ENCODE measurements at regions of chr12 and their contacts with region 1.

Region 1: DNA sequence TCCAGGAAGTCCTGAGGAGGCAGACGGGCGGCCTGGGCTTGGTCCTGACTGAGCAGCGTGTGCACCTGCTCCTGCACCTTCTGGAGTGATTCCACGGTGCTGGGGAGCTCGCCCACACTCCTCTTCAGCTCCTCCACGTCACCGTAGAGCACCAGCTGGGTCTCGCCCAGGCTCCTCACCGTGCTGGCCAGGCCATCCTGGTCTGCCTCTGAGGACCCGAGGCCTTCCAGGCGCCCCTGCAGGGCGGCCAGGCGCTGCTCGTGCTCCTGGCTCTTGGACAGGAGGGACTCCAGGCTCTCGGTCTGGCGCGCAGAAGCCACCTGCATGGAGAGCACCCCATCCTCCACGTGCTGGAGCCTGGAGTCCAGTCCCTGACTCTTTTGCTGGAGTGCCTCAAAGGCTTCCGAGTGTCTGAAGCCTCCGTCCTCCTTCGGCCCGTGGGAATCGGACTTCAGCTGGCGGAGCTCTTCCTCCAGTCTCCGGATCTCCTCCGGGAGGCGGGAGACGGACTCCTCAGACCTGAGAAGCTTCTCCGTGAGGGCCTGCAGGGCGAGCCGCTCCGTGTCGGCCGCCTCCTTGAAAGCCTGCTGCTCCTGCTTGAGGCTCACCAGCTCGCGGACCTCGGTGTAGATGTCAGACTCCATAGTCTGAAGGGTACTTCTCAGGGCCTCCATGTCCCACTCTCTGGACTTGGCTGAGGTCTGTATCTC is 8.4 kb downstream of the CKAP4 start:
- DNase-seq: peak in 1 of 3 donors; percentile 41
- ATAC-seq: peak in 1 of 4 donors; percentile 31
- H3K4me3 ChIP-seq: no peak overlapping the region
- H3K27ac ChIP-seq: no peak overlapping the region
- H3K4me1 ChIP-seq: no peaks in the 10 kb centered on the region
- H3K27me3 ChIP-seq: no peaks in the 10 kb centered on the region
- CTCF ChIP-seq: no peak
- POLR2A ChIP-seq: no peak

Region 2: DNA sequence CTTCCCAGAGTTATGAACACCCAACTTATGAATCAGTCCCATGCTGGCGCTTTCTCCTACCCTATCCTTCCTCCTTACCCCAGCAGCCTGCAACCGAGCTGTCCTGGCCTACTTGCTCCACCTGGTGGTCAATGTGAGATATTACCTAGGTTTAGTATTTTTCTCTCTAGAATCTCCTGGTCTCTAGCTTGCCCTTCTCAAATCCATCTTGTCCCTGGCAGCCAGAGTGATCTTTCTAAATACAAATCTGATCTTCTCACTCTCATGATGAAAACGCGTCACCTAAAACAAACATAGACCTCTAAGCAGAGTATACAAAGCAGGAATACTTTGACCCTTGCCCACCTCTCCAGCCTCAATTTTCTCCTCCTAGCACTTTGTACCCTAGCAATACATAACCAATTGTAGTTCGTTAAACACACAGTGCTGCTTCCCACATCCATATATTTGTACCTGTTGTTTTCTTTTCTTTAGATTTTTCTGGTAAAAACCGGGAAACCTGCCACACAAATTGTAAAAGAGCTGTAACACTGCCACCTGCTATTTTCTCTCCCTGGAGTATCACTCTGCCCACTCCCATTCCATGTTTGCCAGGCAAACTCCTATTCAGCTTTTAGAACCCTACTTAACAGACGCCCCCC is 43.2 kb after region 1 on chr12:
- intact Hi-C with region 1: loop called in 1 of 2 experiments (anchors 5 kb)
- DNase-seq: peak; percentile 49 to 73 (median 66)
- ATAC-seq: peak; percentile 93 to 97 (median 95)
- H3K4me3 ChIP-seq: no peak overlapping the region
- H3K27ac ChIP-seq: peak overlapping the region in 2 of 3 donors; percentile 24 to 40
- H3K4me1 ChIP-seq: peaks cover 0 to 10% (median 0%) of the 10 kb centered on the region in 4 donors
- H3K27me3 ChIP-seq: no peaks in the 10 kb centered on the region
- CTCF ChIP-seq: peak; percentile 74 to 86 (median 79)
- POLR2A ChIP-seq: no peak